Heart right ventricle (tissue), 16 donors: ENCODE measurements at regions of chr17 and their contacts with region 1.

Region 1: DNA sequence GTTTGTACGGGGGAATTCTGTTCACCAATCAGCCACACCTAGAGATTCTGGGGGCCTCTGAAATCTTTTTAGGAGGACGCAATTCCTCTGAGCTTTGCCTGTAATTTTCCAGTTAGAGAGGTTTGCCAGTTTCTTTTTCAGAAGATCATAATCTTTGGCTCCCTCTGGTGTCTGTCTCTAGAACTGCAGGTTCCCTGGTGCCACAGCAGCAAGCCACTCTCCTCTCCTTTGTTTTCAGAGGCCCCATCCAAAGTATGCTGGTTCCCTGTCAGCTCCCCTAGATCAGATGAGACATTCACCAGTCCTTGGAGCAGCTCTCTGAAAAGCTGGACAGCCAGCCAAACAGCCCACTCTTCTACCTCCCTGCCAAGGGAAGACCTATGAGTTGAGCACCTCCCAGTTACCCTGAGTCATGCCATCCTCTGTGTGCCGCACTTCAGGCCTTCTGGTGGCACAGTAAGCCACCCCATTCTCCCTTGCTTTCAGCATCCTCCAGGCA is 36.1 kb downstream of the RNF112 start:
- DNase-seq: peak in 1 of 2 donors; percentile 82
- ATAC-seq: peak; percentile 55 to 86 (median 77)
- H3K4me3 ChIP-seq: no peak overlapping the region
- H3K27ac ChIP-seq: peak overlapping the region in 3 of 10 donors; percentile 8 to 45 (median 17)
- H3K4me1 ChIP-seq: peaks cover 0 to 24% (median 3%) of the 10 kb centered on the region in 9 donors
- H3K27me3 ChIP-seq: no peaks in the 10 kb centered on the region
- CTCF ChIP-seq: peak; percentile 88 to 98 (median 95)

Region 2: DNA sequence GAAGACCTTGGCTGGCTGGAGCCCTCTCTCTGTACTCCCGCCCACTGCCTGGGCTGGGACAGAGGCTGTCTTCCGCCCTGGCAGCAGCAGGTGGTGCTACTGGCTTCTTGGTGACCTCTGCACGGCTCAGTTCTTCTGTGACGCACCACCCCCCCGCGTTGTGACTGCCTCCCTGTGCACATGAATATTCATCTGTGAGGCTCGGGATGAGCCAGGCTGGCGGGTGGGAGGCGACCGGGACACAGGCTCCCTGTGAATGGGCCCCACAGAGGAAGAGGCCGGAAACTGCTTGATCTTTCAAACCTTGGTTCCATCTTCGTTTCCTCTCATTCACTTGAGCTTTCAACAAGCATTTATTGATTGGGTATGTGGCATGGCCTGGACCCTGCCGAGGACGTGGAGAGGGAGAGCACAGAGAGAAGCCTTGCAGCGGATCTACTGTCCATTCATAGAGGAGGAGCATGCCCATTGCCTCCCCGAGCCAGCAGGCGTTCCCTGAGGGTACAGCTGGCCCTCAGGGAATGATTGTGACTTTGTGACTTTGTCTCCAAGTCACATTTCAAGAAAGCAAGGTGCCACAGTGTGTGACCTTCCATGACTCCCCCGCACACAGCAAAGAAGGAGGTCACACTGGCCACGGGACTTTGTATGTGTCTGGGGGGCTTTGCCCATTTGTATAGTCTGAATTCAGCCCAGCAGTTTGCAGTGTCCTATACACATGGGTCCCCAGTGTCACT is 129.6 kb before region 1 on chr17:
- intact Hi-C with region 1: loop called in 1 of 10 experiments (anchors 5 kb)
- DNase-seq: peak; percentile 78 to 89
- ATAC-seq: peak; percentile 88 to 96 (median 94)
- H3K4me3 ChIP-seq: no peak overlapping the region
- H3K27ac ChIP-seq: peak overlapping the region in 9 of 10 donors; percentile 7 to 73 (median 48)
- H3K4me1 ChIP-seq: peaks cover 3 to 53% (median 39%) of the 10 kb centered on the region in 9 donors
- H3K27me3 ChIP-seq: peaks cover 0 to 76% (median 0%) of the 10 kb centered on the region in 7 donors
- CTCF ChIP-seq: peak in 8 of 9 donors; percentile 18 to 70 (median 41)

Region 3: GRCh38 chr17:19377602-19378392 is 69.3 kb before region 1 on chr17:
- intact Hi-C with region 1: loop called in 2 of 10 experiments (anchors 5 kb)
- DNase-seq: peak; percentile 98 to 99
- ATAC-seq: peak; percentile 95 to 98 (median 96)
- H3K4me3 ChIP-seq: peak overlapping the region; percentile 47 to 96 (median 88)
- H3K27ac ChIP-seq: peak overlapping the region; percentile 80 to 98 (median 94)
- H3K4me1 ChIP-seq: peaks cover 3 to 33% (median 22%) of the 10 kb centered on the region in 9 donors
- H3K27me3 ChIP-seq: no peaks in the 10 kb centered on the region
- CTCF ChIP-seq: peak in 5 of 9 donors; percentile 15 to 31 (median 17)